ENCODE measurements at regions of chr1 and their contacts with region 1.

Region 1: GRCh38 chr1:176691251-176692228 is 228.6 kb downstream of the PAPPA2 start:
- DNase-seq: no peak
- ATAC-seq: peak; percentile 68
- H3K4me3 ChIP-seq: no peak overlapping the region
- H3K27ac ChIP-seq: no peak overlapping the region
- H3K4me1 ChIP-seq: no peaks in the 10 kb centered on the region
- H3K27me3 ChIP-seq: no peaks in the 10 kb centered on the region

Region 2: DNA sequence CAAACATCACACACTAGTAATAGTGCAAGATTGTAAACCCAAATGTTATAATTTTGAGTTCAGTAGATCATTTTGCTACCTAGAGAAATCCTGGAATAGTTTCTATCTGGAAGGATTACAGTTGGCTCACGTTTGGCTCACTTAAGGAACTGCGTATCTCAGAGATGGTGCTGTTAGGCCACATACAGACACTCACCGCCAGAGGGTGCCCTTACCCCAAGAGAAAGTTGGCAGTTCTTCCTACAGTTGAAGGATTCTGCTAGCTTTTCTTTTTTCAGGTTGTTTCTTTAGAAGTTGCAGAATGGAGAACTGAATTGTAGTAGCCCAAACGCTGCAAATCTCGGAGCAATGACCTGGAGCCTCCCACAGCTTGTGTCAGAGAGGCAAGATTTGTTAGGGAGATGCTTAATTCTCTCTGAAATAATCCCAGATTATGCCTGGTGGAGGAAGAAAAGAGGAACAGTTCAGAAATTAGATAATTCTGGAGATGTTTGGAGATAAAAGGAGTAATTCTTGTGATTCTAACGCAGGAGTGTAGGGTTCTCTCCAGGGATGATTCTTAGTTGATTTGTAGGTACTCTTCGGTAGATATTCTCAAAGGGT is 316.5 kb before region 1 on chr1:
- intact Hi-C with region 1: loop called (anchors 5 to 10 kb)
- DNase-seq: peak; percentile 85 to 90
- ATAC-seq: peak; percentile 89
- H3K4me3 ChIP-seq: no peak overlapping the region
- H3K27ac ChIP-seq: no peak overlapping the region
- H3K4me1 ChIP-seq: no peaks in the 10 kb centered on the region
- H3K27me3 ChIP-seq: no peaks in the 10 kb centered on the region

Region 3: DNA sequence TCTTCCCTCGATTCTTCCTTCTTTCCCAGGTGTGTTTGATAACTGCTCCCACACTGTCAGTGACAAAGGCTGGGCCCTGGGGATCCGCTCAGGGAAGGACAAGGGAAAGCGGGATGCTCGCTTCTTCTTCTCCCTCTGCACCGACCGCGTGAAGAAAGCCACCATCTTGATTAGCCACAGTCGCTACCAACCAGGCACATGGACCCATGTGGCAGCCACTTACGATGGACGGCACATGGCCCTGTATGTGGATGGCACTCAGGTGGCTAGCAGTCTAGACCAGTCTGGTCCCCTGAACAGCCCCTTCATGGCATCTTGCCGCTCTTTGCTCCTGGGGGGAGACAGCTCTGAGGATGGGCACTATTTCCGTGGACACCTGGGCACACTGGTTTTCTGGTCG is 97.0 kb before region 1 on chr1:
- intact Hi-C with region 1: no loop called
- DNase-seq: no peak
- ATAC-seq: no peak
- H3K4me3 ChIP-seq: no peak overlapping the region
- H3K27ac ChIP-seq: no peak overlapping the region
- H3K4me1 ChIP-seq: no peaks in the 10 kb centered on the region
- H3K27me3 ChIP-seq: no peaks in the 10 kb centered on the region

Region 4: DNA sequence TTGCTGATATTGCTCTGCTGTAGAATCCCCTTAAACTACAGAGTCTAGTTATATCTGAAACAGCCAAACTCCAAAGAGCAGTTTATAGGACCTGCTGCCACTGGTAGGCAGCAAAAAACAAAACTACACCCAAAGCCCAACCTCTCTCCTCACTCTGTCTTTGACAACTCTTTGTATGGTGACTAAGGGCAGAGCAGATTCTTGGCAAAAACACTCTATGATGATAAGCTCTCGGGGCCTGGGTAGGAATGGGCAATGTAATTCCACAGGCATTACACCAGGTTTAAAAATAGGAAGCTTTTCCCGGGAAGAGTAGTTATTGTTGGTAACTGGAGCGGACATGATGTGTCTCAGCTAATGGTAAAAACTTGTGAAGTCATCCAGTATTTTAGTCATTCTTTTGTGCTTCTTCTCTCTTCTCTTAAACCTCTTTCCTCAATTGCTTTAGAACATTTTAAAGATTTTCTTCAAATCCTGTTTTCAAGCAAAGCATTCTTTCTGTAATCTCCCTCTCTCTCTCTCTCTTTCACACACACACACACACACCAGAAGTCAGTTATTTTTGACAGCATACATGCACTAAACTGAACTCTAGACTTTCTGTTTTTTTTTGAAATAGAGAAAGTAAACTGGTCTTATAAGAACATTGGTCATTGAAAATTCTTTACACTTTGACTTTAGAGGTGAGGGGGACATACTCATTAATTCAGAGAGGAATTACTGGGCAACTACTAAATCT is 35.1 kb before region 1 on chr1:
- intact Hi-C with region 1: loop called in 1 of 2 experiments (anchors 5 kb)
- DNase-seq: no peak
- ATAC-seq: peak; percentile 89
- H3K4me3 ChIP-seq: no peak overlapping the region
- H3K27ac ChIP-seq: peak overlapping the region; percentile 100
- H3K4me1 ChIP-seq: peaks cover 5% of the 10 kb centered on the region in 2 donors
- H3K27me3 ChIP-seq: no peaks in the 10 kb centered on the region

Region 5: GRCh38 chr1:176843352-176844297 is 152.1 kb after region 1 on chr1:
- intact Hi-C with region 1: loop called (anchors 5 to 10 kb)
- DNase-seq: peak in 1 of 2 donors; percentile 50
- ATAC-seq: peak; percentile 76
- H3K4me3 ChIP-seq: no peak overlapping the region
- H3K27ac ChIP-seq: no peak overlapping the region
- H3K4me1 ChIP-seq: no peaks in the 10 kb centered on the region
- H3K27me3 ChIP-seq: no peaks in the 10 kb centered on the region